Posterior vena cava (tissue), 2 donors: ENCODE measurements at regions of chr1 and their contacts with region 1.

Region 1: GRCh38 chr1:24022581-24023361 is 42.6 kb upstream of the SRSF10 start:
- DNase-seq: no peak

Region 2: DNA sequence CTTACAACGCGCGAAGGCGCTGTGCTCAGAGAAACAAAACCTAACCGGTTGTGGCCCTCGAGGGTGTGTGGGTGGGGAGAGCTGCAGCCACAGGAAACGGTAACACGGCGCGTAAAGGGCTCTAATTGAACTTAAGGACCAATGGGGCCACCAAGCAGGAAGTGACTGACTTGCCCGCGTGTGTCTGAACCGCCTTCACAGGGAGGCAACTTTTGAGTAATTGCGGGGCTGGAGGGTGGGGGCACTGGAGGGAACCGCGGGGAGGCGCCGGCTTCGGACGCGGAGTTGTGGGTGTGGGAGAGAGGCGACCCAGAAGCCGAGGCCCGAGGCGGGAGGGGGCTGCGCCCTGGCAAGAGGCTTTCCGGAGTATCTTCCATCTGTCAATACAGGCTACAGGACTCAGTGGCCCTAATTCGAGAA is 63.7 kb before region 1 on chr1:
- intact Hi-C with region 1: loop called (anchors 5 kb)
- DNase-seq: peak; percentile 96